SK-N-SH (cell line): ENCODE measurements at regions of chr10 and their contacts with region 1.

Region 1: DNA sequence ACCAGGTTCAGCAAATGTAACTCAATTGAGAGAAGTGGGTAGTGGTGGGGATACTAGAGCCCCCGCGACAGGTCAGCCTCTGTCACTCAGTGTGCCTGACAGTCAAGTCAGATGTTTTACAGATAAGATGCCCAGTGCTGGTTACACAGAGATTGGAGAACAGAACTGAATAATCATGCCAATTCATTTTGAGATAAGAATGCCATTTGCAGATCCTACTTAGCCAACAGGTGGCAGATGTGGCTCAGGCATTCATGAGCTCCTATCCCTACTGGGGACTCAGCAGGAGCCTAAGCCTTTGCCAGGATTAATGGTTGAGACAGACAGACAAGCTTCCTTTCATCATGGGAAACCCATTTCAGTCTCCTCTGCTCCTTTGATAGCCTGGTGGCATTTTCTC is 137.8 kb downstream of the MAPK8 start:
- DNase-seq: peak; percentile 75
- H3K4me3 ChIP-seq: no peak overlapping the region
- H3K27ac ChIP-seq: peak overlapping the region in 1 of 2 experiments; percentile 36; a peak in 2 of 4 replicates
- H3K4me1 ChIP-seq: peaks cover 12 to 29% of the 10 kb centered on the region in 2 experiments; a peak in 3 of 4 replicates
- H3K27me3 ChIP-seq: no peaks in the 10 kb centered on the region
- CTCF ChIP-seq: peak; percentile 34; the same call in 1 of the 2 replicates
- EP300 ChIP-seq: peak in 1 of 2 experiments; percentile 53; a peak in 1 of 4 replicates
- RAD21 ChIP-seq: peak; percentile 81

Region 2: DNA sequence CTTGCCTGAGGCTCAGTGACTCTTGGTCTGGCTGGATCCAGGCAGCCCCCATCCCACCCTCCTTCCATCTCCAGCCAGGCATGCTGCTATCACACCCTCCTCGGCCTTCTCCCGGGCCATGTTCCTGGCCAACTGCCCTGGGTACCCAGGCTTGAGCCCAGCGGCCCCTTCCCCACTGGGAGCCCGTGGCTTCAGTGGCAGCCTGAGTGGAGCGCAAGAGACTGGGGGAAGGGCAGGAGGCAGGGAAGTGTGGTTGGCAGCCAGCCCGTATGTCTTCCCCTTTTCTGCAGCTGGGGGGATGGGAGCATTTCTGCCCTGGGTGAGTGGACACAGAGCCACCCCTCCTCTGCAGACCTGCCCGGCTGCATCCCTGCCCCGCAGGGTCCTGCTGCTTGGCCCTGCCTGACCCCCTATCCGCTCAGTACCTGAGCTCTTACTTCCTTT is 12.1 kb after region 1 on chr10:
- CTCF ChIA-PET with region 1: interaction called, 18 read pairs
- POLR2A ChIA-PET with region 1: interaction called, 3 read pairs
- DNase-seq: peak; percentile 82
- H3K4me3 ChIP-seq: no peak overlapping the region
- H3K27ac ChIP-seq: peak overlapping the region in 1 of 2 experiments; percentile 44; a peak in 1 of 4 replicates
- H3K4me1 ChIP-seq: peaks cover 3 to 25% of the 10 kb centered on the region in 2 experiments; a peak in 2 of 4 replicates
- H3K27me3 ChIP-seq: no peaks in the 10 kb centered on the region
- CTCF ChIP-seq: no peak
- EP300 ChIP-seq: no peak
- RAD21 ChIP-seq: no peak

Region 3: DNA sequence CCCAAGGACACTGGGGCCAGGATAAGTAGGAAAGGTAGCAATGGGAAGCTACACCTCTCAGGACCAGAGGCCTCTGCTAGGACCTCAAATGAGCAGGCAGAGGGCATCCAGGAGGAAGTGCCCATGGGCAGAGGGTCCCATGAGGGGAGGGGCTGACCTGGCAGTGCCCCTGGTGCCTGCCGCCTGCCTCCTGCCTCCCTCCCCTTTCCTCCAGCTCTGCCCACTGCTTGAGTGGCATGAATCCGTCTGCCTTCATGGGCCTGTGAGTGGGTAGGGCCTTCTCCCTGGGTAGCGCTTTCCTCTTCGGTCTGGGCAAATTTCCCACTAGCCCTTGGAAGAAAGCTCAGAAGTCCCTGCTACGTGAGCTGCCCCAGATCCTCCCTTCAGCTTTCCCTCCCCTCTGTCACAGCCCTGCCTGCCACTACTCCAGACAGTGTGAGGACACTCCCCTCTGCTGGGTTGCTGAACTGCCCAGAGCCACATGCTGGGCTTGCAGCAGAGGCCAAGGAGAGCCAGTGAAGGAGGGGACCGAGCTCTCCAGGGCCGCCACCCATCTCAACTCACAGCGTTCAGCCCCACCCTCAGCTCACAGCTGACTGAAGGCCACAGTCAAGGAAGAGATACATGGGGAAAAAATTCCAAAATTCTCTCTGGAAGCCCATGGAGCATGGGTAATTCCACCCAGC is 19.2 kb after region 1 on chr10:
- CTCF ChIA-PET with region 1: interaction called, 12 read pairs
- POLR2A ChIA-PET with region 1: no interaction called
- DNase-seq: peak; percentile 61
- H3K4me3 ChIP-seq: no peak overlapping the region
- H3K27ac ChIP-seq: peak overlapping the region in 1 of 2 experiments; percentile 14; a peak in 1 of 4 replicates
- H3K4me1 ChIP-seq: peaks cover 0 to 49% of the 10 kb centered on the region in 2 experiments; a peak in 1 of 4 replicates
- H3K27me3 ChIP-seq: no peaks in the 10 kb centered on the region
- CTCF ChIP-seq: no peak
- EP300 ChIP-seq: no peak
- RAD21 ChIP-seq: peak; percentile 38

Region 4: GRCh38 chr10:48506147-48506917 is 62.1 kb after region 1 on chr10:
- CTCF ChIA-PET with region 1: interaction called, 20 read pairs
- POLR2A ChIA-PET with region 1: no interaction called
- DNase-seq: peak; percentile 60
- H3K4me3 ChIP-seq: no peak overlapping the region
- H3K27ac ChIP-seq: no peak overlapping the region
- H3K4me1 ChIP-seq: peaks cover 0 to 16% of the 10 kb centered on the region in 2 experiments; a peak in 1 of 4 replicates
- H3K27me3 ChIP-seq: no peaks in the 10 kb centered on the region
- CTCF ChIP-seq: peak; percentile 52
- EP300 ChIP-seq: no peak
- RAD21 ChIP-seq: peak; percentile 74

Region 5: DNA sequence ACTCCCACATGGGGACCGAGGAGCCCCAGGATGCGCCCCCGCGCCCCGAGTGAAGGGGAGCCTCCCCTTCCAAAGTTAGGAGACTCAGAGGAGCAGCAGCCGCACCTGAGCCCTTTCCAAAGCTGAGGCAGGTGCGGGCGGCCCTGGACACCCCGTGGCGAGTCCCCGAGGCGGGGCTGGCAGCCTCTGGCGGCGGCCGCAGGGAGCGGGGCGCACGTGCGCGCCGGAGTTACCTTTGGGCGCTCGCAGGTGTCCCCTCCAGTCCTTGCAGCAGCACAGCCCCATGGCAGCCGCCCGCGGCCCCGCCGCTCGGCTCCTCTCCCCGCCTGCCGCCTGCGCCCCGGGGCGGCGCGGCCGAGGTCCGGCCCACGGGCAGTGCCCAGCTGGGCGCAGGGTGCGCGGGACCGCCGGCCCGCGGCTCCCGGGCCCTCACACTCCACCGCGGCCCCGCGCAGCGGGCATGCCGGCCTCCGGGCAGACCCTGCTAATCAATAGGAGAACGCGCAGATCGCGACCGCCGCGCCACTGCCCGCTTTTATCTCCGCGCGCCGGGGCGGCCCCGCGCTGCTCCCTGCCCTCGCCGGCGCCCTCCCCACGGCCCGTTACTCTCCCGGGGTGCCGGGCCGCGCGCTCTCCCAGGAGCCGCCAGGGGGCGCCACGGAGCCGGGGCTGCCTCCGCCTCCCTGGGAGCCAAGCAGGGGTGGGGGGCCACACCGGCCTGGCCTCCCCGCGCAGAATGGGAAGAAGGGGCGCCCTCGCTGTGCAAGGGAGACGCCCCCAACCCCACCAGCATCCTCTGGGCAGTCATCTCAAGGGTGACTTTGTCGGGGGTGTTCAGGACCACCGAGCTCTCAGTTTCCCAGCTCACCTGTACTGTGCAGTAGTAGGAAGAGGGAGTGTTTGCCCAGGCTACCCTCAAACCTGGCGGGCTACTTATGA is 79.8 kb after region 1 on chr10:
- CTCF ChIA-PET with region 1: interaction called, 21 read pairs
- POLR2A ChIA-PET with region 1: no interaction called
- DNase-seq: peak; percentile 95
- H3K4me3 ChIP-seq: peak overlapping the region; percentile 59 to 65
- H3K27ac ChIP-seq: peak overlapping the region in 1 of 2 experiments; percentile 42; a peak in 2 of 4 replicates
- H3K4me1 ChIP-seq: peaks cover 23 to 28% of the 10 kb centered on the region in 2 experiments; a peak in 3 of 4 replicates
- H3K27me3 ChIP-seq: no peaks in the 10 kb centered on the region
- CTCF ChIP-seq: peak; percentile 69
- EP300 ChIP-seq: no peak
- RAD21 ChIP-seq: peak; percentile 43

Region 6: GRCh38 chr10:48541144-48541795 is 97.0 kb after region 1 on chr10:
- CTCF ChIA-PET with region 1: interaction called, 17 read pairs
- POLR2A ChIA-PET with region 1: no interaction called
- DNase-seq: no peak
- H3K4me3 ChIP-seq: no peak overlapping the region
- H3K27ac ChIP-seq: peak overlapping the region in 1 of 2 experiments; percentile 27; a peak in 1 of 4 replicates
- H3K4me1 ChIP-seq: peaks cover 13 to 34% of the 10 kb centered on the region in 2 experiments; a peak in 3 of 4 replicates
- H3K27me3 ChIP-seq: no peaks in the 10 kb centered on the region
- CTCF ChIP-seq: no peak
- EP300 ChIP-seq: peak in 1 of 2 experiments; percentile 78; a peak in 1 of 4 replicates
- RAD21 ChIP-seq: no peak

Region 7: GRCh38 chr10:48684792-48685623 is 240.7 kb after region 1 on chr10 and contains the start of gene WDFY4:
- CTCF ChIA-PET with region 1: no interaction called
- POLR2A ChIA-PET with region 1: no interaction called
- DNase-seq: no peak
- H3K4me3 ChIP-seq: no peak within 1 kb of the TSS
- H3K27ac ChIP-seq: no peak within 1 kb of the TSS
- H3K4me1 ChIP-seq: no peaks in the 10 kb centered on the region
- H3K27me3 ChIP-seq: no peaks in the 10 kb centered on the region
- CTCF ChIP-seq: no peak
- EP300 ChIP-seq: no peak
- RAD21 ChIP-seq: no peak
- polyA plus RNA-seq, gene WDFY4: not detected in 2 replicates